BJ (cell line): ENCODE measurements at regions of chr4 and their contacts with region 1.

Region 1: GRCh38 chr4:176340871-176341685 is 21.3 kb downstream of the SPCS3 start:
- DNase-seq: no peak
- H3K4me3 ChIP-seq: no peak overlapping the region
- H3K27me3 ChIP-seq: no peaks in the 10 kb centered on the region
- CTCF ChIP-seq: peak; percentile 49

Region 2: GRCh38 chr4:176034499-176034898 is 306.6 kb before region 1 on chr4:
- CTCF ChIA-PET with region 1: interaction called, 12 read pairs
- POLR2A ChIA-PET with region 1: no interaction called
- DNase-seq: peak; percentile 2
- H3K4me3 ChIP-seq: no peak overlapping the region
- H3K27me3 ChIP-seq: no peaks in the 10 kb centered on the region
- CTCF ChIP-seq: no peak

Region 3: DNA sequence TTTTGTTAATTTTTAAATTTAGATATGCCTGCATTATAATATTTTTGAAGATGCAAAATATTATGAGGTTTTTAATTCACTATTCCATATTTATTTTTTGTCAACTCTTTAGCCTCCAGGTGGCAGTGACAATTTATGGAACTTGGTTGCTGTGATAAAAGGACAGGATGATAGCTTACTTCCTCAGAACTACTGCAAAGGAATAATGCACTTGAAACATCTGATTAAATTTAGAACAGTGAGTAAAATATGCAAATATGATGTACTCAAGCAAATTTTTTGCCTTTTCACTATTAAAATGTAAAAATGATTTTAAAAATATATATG is 190.8 kb before region 1 on chr4:
- CTCF ChIA-PET with region 1: interaction called, 41 read pairs
- POLR2A ChIA-PET with region 1: interaction called, 5 read pairs
- DNase-seq: peak; percentile 9
- H3K4me3 ChIP-seq: no peak overlapping the region
- H3K27me3 ChIP-seq: no peaks in the 10 kb centered on the region
- CTCF ChIP-seq: peak; percentile 42; the same call in 1 of the 2 replicates

Region 4: GRCh38 chr4:176159842-176160241 is 181.2 kb before region 1 on chr4:
- CTCF ChIA-PET with region 1: interaction called, 12 read pairs
- POLR2A ChIA-PET with region 1: no interaction called
- DNase-seq: no peak
- H3K4me3 ChIP-seq: no peak overlapping the region
- H3K27me3 ChIP-seq: no peaks in the 10 kb centered on the region
- CTCF ChIP-seq: no peak